ENCODE measurements at regions of chr1 and their contacts with region 1.

Region 1: GRCh38 chr1:1122078-1122811 is 6.4 kb upstream of the C1orf159 start:
- DNase-seq: no peak
- H3K4me3 ChIP-seq: peak overlapping the region; percentile 37
- CTCF ChIP-seq: peak; percentile 98

Region 2: GRCh38 chr1:983799-984473 is 138.3 kb before region 1 on chr1:
- CTCF ChIA-PET with region 1: interaction called, 10 read pairs
- POLR2A ChIA-PET with region 1: no interaction called
- DNase-seq: no peak
- H3K4me3 ChIP-seq: peak overlapping the region; percentile 40
- CTCF ChIP-seq: peak; percentile 91

Region 3: DNA sequence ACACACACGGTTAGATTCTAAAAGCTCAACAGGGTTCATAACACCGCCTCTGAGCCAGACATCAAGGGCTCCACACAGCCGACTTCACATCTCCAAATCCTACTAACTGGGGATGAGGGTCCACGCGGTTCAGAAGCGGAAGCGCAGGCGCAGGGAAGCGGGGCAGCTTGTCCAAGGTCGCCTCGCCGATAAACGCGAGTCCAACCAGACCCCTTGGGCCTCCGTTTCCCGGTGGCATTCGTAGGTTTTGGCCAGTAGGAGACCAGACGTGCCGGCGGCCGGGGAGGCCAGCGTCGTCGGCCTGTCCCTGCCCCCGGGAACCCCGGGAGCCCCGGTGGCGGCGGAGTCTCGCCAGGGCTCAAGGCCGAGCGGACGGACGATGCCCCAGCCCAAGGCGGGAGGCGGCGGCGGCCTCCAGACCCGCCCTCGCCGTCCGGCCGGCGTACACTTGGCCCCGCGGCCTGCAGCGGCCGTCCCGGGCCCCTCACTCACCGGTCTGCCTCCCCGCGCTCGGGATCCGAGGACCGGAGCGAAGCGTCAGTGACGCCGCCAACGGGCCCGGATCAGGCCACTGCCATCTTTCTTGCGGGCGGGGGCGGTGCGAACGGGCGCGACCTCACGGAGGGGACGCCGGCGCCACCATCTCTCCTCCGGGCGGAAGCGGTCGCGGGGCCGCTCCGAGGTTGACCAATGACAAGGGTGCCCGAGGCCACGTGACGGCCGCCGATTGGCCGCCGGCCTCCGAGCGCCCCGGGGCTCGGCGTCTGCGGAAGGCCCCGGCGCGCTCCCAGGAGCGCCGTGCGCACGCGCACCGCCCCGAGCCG is 109.4 kb after region 1 on chr1 and contains the start of gene SDF4:
- CTCF ChIA-PET with region 1: interaction called, 59 read pairs
- POLR2A ChIA-PET with region 1: no interaction called
- DNase-seq: peak; percentile 45
- H3K4me3 ChIP-seq: peak within 1 kb of the TSS; percentile 77
- CTCF ChIP-seq: no peak

Region 4: GRCh38 chr1:1250786-1251284 is 128.6 kb after region 1 on chr1:
- CTCF ChIA-PET with region 1: interaction called, 37 read pairs
- POLR2A ChIA-PET with region 1: no interaction called
- DNase-seq: no peak
- H3K4me3 ChIP-seq: no peak overlapping the region
- CTCF ChIP-seq: no peak

Region 5: DNA sequence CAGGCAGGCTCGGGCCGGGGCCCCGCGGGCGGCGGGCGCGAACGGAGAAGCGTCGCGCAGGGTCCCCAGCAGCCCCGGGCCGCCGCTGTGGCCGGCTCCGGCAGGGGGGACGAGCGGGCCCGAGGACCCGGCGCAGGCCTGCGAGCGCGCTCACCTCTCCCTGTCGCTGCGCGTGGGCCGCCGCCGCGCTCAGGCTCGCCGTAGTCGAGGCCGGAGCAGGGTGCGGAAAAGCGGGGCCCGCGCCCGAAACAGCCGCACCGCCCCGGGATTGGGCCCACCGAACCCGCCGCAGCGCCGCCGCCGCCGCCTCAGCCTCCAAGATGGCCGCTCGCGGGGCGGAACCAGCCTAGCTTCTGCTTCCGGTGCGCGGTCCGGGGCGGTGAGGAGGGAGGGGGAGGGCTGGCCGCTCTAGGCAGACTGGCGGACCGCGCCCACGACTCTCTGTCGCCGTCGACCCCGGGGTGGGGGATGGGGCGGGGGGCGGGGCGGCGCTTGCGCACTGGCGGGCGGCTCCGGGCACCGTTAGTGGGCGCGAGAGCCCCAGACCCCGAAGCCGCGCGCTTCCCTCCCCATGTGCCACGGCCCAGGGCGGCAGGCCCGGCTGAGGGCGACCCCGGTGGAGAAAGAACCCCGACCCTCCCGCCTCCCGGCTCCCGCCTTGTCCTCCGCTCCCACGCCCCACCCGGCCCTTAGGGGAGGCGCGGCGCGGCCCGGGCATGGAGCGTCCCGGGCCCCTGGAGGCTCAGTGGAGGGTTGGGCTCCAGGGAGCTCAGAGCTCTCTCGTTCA is 151.5 kb after region 1 on chr1 and contains the start of gene UBE2J2:
- CTCF ChIA-PET with region 1: interaction called, 12 read pairs
- POLR2A ChIA-PET with region 1: no interaction called
- DNase-seq: peak; percentile 47
- H3K4me3 ChIP-seq: peak within 1 kb of the TSS; percentile 83
- CTCF ChIP-seq: peak; percentile 11

Region 6: GRCh38 chr1:1305300-1306069 is 183.2 kb after region 1 on chr1:
- CTCF ChIA-PET with region 1: interaction called, 16 read pairs
- POLR2A ChIA-PET with region 1: no interaction called
- DNase-seq: no peak
- H3K4me3 ChIP-seq: peak overlapping the region; percentile 68
- CTCF ChIP-seq: peak; percentile 6